ENCODE measurements at regions of chr17 and their contacts with region 1.

Region 1: DNA sequence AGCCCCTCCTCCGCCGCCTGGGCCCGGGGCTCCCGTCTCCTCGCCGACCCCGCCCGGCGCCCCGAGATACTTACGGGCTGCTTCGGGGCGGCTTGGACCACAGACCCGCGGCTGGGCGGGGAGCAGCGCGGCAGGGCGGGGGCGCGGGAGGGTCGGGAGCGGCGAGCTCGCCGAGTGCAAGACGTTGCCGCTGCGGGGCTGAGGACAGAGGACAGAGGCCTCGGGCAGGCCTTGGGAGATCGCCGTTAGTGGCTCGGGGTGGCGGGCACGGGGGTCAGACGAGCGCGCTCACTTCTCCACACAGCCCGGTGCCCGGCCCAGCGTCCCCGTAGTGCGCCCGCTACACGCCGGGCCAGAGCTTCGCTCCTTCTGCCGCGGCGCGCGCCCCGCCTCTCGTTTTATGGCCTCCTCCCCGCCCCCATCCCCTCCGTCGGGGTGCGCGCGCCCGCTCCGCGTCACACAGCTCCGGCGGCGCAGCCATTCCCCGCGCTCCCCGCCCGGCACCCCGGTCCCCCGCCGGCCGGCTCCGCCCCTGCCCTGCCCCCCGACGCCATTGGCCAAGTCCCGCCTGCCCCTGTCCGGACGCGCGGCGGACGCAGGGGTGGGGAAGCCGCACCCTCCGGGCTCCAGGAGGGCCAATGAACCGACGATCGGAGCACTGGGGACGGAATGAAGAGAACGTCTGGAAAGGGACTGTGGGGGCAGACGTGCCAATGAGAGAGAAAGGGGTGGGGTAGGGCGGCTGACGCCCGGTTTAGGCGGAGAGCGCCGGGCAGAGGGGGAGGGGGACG is at the start of gene TOB1:
- DNase-seq: peak; percentile 96
- ATAC-seq: peak; percentile 73
- H3K4me3 Mint-ChIP-seq: peak within 1 kb of the TSS; percentile 92
- H3K27ac Mint-ChIP-seq: peak within 1 kb of the TSS; percentile 95
- H3K4me1 Mint-ChIP-seq: peaks cover 46% of the 10 kb centered on the region
- H3K27me3 Mint-ChIP-seq: peaks cover 7% of the 10 kb centered on the region
- total RNA-seq, gene TOB1: 44.5 to 47.6 TPM

Region 2: DNA sequence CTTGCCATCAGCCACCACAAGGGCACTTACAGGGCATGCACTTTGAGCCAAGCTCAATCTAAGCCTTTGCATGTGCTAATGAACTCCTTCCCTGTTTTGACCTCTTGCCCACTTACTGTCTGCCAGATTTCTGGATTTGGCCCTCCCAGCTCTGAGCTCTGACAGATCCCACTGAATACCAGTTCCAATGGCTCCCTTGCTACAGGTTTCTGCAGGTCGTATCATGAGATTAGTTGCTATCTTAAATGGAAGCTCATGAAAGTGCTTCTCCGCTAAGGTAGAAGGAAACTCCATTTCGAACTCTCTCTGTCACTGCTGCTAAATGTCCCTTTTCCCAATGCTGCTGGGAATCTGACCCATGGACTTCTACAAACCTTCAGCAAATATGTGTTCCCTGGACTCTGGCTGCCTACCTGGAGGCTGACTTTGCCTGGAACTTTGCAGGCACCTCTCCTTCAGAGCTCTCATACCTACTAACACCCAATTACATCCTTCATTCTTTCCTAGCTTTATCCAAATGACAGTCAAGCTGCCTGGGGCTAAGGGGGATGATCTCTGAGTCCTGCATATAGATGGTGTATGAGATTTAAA is 23.4 kb after region 1 on chr17:
- CTCF ChIA-PET with region 1: interaction called, 3 read pairs
- POLR2A ChIA-PET with region 1: interaction called, 28 read pairs
- DNase-seq: no peak
- ATAC-seq: no peak
- H3K4me3 Mint-ChIP-seq: no peak overlapping the region
- H3K27ac Mint-ChIP-seq: no peak overlapping the region
- H3K4me1 Mint-ChIP-seq: peaks cover 12% of the 10 kb centered on the region
- H3K27me3 Mint-ChIP-seq: peaks cover 23% of the 10 kb centered on the region

Region 3: DNA sequence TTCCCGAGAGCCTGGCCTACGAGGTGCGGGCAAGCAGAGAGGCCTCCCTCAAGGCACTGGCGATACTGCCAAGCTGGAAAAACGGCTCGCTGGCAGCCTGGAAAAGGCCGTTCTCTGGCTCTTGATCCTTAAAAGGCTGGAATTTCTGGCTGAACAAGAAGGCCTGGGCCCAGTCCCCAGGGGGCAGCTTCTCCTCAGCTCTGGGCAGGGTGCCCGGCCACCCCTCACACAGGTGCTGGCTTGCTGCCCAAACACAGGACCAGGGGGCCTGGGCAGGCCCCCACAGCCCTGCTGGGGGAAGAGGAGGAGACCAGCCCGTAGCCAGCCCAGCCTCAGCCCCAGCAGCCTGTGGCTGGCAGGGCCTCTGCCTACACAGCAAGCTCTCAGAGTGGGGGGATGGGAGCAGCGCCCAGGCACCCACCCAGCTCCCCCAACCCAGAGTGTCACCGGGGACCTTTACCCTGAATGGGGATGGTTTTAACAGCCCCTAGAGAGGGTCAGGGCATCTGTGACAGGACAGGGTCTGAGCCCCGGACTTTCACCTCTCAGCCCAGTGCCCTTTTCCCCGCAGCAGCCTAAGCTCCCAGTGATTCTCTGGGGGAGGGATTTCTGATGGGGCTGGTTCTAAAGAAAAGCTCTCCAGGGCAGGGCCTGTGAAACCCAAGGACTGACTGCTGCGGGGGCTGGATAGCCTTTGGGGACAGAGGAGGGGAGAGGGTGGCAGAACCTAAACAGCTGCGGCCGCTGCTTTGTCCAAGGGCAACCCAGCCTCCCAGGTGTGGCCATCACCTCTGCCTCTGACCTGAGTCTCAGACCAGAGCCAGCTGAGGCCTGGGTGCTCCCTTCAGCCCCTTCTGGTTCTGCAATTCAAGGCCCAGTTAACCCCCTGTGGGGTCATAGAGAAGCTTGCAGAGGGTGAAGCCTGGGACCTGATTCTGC is 38.6 kb after region 1 on chr17:
- CTCF ChIA-PET with region 1: interaction called, 9 read pairs
- POLR2A ChIA-PET with region 1: interaction called, 64 read pairs
- DNase-seq: no peak
- ATAC-seq: peak; percentile 27
- H3K4me3 Mint-ChIP-seq: no peak overlapping the region
- H3K27ac Mint-ChIP-seq: peak overlapping the region; percentile 79
- H3K4me1 Mint-ChIP-seq: peaks cover 58% of the 10 kb centered on the region
- H3K27me3 Mint-ChIP-seq: peaks cover 3% of the 10 kb centered on the region

Region 4: GRCh38 chr17:50931144-50931908 is 65.1 kb after region 1 on chr17:
- CTCF ChIA-PET with region 1: interaction called, 15 read pairs
- POLR2A ChIA-PET with region 1: interaction called, 47 read pairs
- DNase-seq: peak; percentile 50
- ATAC-seq: peak; percentile 73
- H3K4me3 Mint-ChIP-seq: peak overlapping the region; percentile 68
- H3K27ac Mint-ChIP-seq: peak overlapping the region; percentile 67
- H3K4me1 Mint-ChIP-seq: peaks cover 33% of the 10 kb centered on the region
- H3K27me3 Mint-ChIP-seq: peaks cover 33% of the 10 kb centered on the region

Region 5: GRCh38 chr17:50949989-50950881 is 84.1 kb after region 1 on chr17:
- CTCF ChIA-PET with region 1: interaction called, 188 read pairs
- POLR2A ChIA-PET with region 1: interaction called, 163 read pairs
- DNase-seq: peak; percentile 59
- ATAC-seq: peak; percentile 74
- H3K4me3 Mint-ChIP-seq: no peak overlapping the region
- H3K27ac Mint-ChIP-seq: no peak overlapping the region
- H3K4me1 Mint-ChIP-seq: peaks cover 51% of the 10 kb centered on the region
- H3K27me3 Mint-ChIP-seq: no peaks in the 10 kb centered on the region

Region 6: DNA sequence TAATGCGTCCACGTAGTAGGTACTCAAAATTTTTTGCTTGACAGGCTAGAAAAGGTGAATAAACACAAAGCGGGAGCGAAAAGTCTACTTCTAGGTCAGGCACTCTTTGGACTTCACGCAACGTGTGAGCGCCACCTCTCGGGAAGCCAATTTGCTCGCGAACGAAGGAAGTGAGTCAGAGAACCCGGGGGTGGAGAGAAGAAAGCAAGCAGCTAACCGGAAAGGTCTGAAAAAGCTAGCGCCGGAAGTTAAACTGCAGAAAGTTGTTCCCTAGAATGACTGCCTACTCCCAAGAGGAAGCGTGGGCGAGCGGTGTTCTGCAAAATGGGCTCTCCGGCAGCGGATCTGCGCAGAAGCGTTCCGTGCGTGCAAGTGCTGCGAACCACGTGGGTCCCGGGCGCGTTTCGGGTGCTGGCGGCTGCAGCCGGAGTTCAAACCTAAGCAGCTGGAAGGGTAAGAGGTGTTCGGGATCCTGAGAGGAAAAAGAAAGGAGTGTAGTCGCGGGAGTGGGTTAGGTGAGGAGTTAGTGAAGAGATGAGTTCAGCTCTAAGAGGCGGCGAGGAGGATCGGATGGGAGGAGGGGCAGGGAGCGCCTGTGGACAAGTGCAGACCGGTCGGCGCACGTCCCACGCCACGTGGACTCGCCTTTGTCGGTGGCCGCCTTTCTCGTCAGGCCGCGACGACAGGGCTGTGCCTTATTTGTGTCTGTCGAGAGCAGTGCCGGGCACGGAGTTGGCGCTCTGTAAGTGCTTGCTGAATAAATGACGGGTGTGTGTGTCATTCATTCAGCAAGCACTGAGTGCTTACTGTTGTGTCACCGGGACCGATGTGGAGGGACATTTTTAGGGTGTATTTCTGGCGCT is 287.3 kb after region 1 on chr17 and contains the start of gene NME1:
- CTCF ChIA-PET with region 1: interaction called, 3 read pairs
- POLR2A ChIA-PET with region 1: interaction called, 10 read pairs
- DNase-seq: peak; percentile 98
- ATAC-seq: peak; percentile 95
- H3K4me3 Mint-ChIP-seq: no peak within 1 kb of the TSS
- H3K27ac Mint-ChIP-seq: no peak within 1 kb of the TSS
- H3K4me1 Mint-ChIP-seq: peaks cover 12% of the 10 kb centered on the region
- H3K27me3 Mint-ChIP-seq: no peaks in the 10 kb centered on the region
- total RNA-seq, gene NME1: 148 to 150 TPM

Measured in activated CD8-positive, alpha-beta T cell treated with anti-CD3 and anti-CD28 coated beads, Interleukin-2, amount 10 ng/mL, durations not matched to agents 7 days and 5 days (primary cell).